ENCODE measurements at regions of chr6 and their contacts with region 1.

Region 1: DNA sequence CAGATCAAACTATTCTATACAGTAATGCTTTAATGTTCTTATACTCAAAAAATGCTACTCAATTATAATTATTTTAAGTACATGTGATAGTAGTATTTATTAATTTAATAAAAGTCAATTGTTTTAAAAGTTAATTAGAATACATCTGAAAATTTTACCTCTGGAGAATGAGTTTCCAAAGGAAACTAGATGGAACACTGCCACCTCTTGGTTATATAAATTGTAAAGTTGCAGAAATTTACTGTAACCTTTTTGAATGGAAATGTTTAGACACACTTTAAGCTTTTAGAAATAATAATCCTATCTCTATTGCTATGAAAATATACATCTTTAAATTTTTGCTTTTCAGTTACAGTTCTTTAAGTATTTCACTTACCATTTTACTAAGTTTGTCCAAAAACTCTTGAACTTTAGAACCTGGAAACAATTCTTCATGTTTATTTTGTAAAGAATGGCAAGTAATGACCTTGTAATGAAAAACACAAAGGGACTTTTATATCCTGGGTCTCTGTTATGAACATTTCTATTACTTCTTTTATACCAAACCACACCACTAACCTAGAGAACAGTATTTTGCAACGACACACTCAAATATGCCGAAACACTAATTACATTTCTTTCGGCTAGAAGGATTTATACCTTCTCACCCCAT is 10.9 kb upstream of the BMP5 start:
- ATAC-seq: no peak
- H3K4me3 ChIP-seq: no peak overlapping the region
- H3K27ac ChIP-seq: no peak overlapping the region
- H3K4me1 ChIP-seq: no peaks in the 10 kb centered on the region

Region 2: GRCh38 chr6:55445648-55446204 is 440.6 kb before region 1 on chr6:
- in situ Hi-C with region 1: loop called in 6 of 9 experiments (anchors 5 to 25 kb)
- ATAC-seq: peak in 1 of 8 experiments; percentile 37
- H3K4me3 ChIP-seq: no peak overlapping the region
- H3K27ac ChIP-seq: no peak overlapping the region
- H3K4me1 ChIP-seq: no peaks in the 10 kb centered on the region

Region 3: DNA sequence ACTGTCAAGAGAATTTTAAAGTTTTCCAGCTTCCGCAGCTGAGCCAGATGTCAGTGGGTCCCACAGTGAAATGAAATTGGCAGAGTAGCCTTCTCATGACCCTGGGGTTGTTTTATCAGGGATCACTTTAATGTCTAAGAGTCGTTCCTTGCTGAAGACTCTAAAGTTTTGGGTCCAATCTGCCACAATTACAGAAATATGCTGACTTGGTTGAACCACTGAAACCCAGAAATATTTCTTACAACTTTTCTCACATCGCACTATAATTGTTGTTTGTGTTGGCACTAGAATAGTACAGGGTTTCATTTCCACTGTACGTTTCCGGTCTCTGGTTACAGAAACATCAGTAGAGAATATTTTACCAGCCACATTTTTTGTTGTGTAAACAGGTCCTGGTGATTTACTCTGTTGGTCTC is 416.4 kb before region 1 on chr6:
- in situ Hi-C with region 1: loop called in 1 of 9 experiments (anchors 25 kb)
- ATAC-seq: no peak
- H3K4me3 ChIP-seq: no peak overlapping the region
- H3K27ac ChIP-seq: no peak overlapping the region
- H3K4me1 ChIP-seq: no peaks in the 10 kb centered on the region

Region 4: DNA sequence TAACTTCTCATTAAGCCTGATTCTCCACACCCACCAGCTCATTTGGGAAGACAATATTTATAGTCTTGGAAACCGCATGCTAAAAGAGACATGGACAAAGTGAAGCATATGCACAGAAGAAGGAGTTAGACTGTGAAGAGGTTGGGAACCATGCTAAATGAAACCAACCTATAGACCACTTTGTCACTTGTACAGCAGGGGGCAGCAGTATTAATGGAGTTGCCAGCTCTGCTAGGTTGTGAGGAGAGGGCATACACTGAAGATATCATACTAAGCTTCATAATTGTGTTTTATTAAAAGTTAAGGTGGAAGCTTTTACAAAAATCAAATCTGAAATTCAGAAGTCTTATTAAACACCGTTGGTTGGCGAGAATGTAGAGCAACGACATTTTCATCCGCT is 269.0 kb before region 1 on chr6:
- in situ Hi-C with region 1: loop called in 1 of 9 experiments (anchors 25 kb)
- ATAC-seq: peak in 3 of 8 experiments; percentile 55 to 71 (median 63)
- H3K4me3 ChIP-seq: no peak overlapping the region
- H3K27ac ChIP-seq: no peak overlapping the region
- H3K4me1 ChIP-seq: no peaks in the 10 kb centered on the region